ENCODE measurements at regions of chr15 and their contacts with region 1.

Region 1: DNA sequence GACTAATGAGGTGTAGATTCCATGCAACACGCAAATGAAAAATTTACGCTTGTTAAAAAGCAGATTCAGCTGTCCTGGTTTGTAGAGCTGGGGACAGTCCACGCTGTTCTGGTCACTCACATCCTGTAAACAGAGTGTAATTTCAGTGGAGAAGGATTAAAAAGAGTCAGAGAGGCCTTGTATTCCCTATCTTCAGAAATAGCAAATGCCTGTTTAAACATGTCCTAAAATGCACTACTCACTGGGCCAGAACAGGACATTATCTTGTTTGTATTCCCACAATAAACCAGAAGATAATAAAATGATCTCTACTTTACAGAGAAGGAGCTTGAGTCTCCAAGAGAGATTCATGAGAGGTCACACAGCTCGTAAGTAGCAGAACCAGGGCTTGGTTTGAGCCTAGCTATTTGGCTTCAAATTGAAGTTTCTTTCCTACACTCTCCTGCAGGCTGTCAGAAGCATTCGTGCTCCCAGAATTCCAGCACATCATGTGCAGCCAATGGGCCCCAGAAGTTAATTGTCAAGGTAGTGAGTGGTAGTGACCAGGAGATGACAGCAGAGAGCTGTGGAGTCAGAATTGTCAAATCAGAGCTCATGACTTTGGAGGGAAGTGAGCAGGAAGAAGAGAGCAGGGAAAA is 242.5 kb downstream of the ATP8B4 start:
- DNase-seq: no peak
- H3K4me3 ChIP-seq: no peak overlapping the region
- H3K27ac ChIP-seq: peak overlapping the region; percentile 84
- H3K4me1 ChIP-seq: peaks cover 40% of the 10 kb centered on the region
- H3K27me3 ChIP-seq: no peaks in the 10 kb centered on the region
- CTCF ChIP-seq: peak in 2 of 3 experiments; percentile 13 to 25
- POLR2A ChIP-seq: no peak

Region 2: GRCh38 chr15:49620658-49621368 is 255.7 kb before region 1 on chr15 and contains the starts of genes DTWD1 and FAM227B:
- intact Hi-C with region 1: loop called (anchors 5 kb)
- DNase-seq: peak in 1 of 2 donors; percentile 98
- H3K4me3 ChIP-seq: peak within 1 kb of the TSS; percentile 65 to 77
- H3K27ac ChIP-seq: peak within 1 kb of the TSS; percentile 85
- H3K4me1 ChIP-seq: peaks cover 35% of the 10 kb centered on the region
- H3K27me3 ChIP-seq: no peaks in the 10 kb centered on the region
- CTCF ChIP-seq: no peak
- POLR2A ChIP-seq: peak in 1 of 2 donors; percentile 82
- total RNA-seq, gene DTWD1: 13.3 TPM
- total RNA-seq, gene FAM227B: 2.9 TPM

Measured in vagina (tissue), 2 donors.